B cell (primary cell): ENCODE measurements at regions of chr1 and their contacts with region 1.

Region 1: DNA sequence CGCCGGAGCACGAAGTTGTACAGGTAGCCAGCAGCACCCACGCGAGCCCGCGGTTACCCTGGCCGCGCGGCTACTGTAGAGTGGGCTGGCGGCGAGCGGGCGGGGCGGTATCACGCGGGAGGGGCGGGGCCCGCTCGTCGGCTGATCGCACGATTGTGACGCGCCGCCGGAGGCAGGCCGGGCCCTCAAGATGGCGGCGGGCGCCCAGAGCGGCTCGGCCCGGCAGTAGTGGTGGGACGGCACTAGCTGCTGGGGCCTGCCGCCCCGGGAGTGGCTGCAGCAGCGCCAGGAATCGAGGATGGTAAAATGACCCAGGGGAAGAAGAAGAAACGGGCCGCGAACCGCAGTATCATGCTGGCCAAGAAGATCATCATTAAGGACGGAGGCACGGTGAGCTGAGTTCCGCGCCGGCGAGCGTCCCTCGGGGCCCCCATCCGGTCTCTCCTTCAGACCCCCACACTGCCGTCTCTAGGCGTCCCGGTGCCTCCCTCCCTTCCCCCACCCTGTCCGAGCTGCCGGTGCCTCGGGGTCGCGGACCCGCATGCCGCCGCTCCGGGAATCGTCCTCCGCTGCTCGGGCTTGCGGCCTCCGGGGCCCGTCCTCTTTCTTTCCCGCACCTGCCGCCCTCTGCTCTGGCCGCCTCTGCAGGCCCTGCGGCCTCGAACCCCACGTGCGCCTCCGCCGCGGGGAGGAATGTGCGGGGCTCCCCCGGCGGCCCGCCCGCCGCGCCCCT is 68.3 kb downstream of the SLC35A3 start:
- DNase-seq: peak; percentile 93
- ATAC-seq: peak; percentile 93
- H3K4me3 ChIP-seq: peak overlapping the region; percentile 87 to 99 (median 97)
- H3K4me3 Mint-ChIP-seq: peak overlapping the region; percentile 92
- H3K27ac ChIP-seq: peak overlapping the region; percentile 96 to 99
- H3K27ac Mint-ChIP-seq: peak overlapping the region; percentile 94
- H3K4me1 ChIP-seq: peaks cover 28 to 40% of the 10 kb centered on the region in 2 donors
- H3K4me1 Mint-ChIP-seq: peaks cover 42% of the 10 kb centered on the region
- H3K27me3 ChIP-seq: no peaks in the 10 kb centered on the region
- H3K27me3 Mint-ChIP-seq: no peaks in the 10 kb centered on the region
- CTCF ChIP-seq: no peak

Region 2: GRCh38 chr1:99808391-99809115 is 229.5 kb before region 1 on chr1:
- CTCF ChIA-PET with region 1: interaction called, 3 read pairs
- POLR2A ChIA-PET with region 1: no interaction called
- intact Hi-C with region 1: loop called (anchors 1 kb)
- DNase-seq: peak; percentile 78
- ATAC-seq: peak; percentile 56
- H3K4me3 ChIP-seq: no peak overlapping the region
- H3K4me3 Mint-ChIP-seq: no peak overlapping the region
- H3K27ac ChIP-seq: no peak overlapping the region
- H3K27ac Mint-ChIP-seq: no peak overlapping the region
- H3K4me1 ChIP-seq: peaks cover 0 to 6% of the 10 kb centered on the region in 2 donors
- H3K4me1 Mint-ChIP-seq: peaks cover 4% of the 10 kb centered on the region
- H3K27me3 ChIP-seq: peaks cover 0 to 4% (median 2%) of the 10 kb centered on the region in 4 experiments
- H3K27me3 Mint-ChIP-seq: peaks cover 31% of the 10 kb centered on the region
- CTCF ChIP-seq: peak; percentile 85

Region 3: GRCh38 chr1:99969729-99970621 is 68.1 kb before region 1 on chr1 and contains the start of gene SLC35A3:
- CTCF ChIA-PET with region 1: interaction called, 4 read pairs
- POLR2A ChIA-PET with region 1: no interaction called
- intact Hi-C with region 1: loop called (anchors 2 kb)
- DNase-seq: peak; percentile 82
- ATAC-seq: peak; percentile 75
- H3K4me3 ChIP-seq: peak within 1 kb of the TSS; percentile 66 to 89 (median 82)
- H3K4me3 Mint-ChIP-seq: peak within 1 kb of the TSS; percentile 100
- H3K27ac ChIP-seq: peak within 1 kb of the TSS; percentile 54 to 84
- H3K27ac Mint-ChIP-seq: peak within 1 kb of the TSS; percentile 95
- H3K4me1 ChIP-seq: peaks cover 10% of the 10 kb centered on the region in 2 donors
- H3K4me1 Mint-ChIP-seq: peaks cover 31% of the 10 kb centered on the region
- H3K27me3 ChIP-seq: no peaks in the 10 kb centered on the region
- H3K27me3 Mint-ChIP-seq: no peaks in the 10 kb centered on the region
- CTCF ChIP-seq: no peak
- total RNA-seq, gene SLC35A3: 30.2 and 31.0 TPM in 2 replicates

Region 4: DNA sequence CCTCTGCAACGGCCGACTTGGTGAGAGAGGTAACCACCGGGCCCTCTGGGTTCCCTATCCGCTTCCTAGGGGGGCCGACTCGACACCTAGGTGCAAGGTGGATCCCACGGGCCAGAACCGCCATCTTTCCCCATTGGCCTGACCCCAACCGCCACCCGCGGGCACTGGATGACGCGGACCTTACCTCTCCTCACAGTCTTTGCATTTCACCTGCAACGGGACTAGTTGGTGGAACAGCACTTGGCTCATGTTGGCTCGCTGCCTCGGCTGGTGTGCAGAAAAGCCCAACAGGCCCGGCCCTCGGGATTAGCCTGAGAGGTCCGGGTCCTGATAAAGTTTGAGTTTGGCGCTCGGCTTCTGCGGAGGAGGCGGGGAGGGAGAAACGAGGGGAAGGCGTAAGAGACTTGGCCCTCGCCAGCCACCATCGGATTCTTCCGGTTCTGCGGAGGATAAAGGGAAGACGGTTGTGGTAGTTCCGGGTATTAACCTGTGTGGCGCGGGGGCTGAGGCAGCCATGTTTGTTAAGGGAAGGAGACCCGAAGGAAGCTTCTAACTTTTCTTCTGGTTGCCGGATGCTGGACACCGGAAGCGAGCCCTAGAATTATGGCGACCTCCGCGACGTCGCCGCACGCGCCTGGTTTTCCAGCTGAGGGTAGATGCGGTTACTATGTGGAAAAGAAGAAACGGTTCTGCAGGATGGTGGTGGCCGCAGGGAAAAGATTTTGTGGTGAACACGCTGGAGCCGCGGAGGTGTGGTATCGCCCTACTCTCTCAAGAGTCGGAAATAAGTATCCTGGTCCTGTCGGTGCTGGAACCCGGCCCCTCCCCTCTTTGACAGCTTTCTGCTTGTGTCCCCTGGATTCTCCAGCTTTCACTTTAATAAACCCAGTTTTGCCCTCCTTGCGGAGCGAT is 94.7 kb after region 1 on chr1 and contains the starts of genes SASS6 and TRMT13:
- CTCF ChIA-PET with region 1: no interaction called
- POLR2A ChIA-PET with region 1: interaction called, 4 read pairs
- intact Hi-C with region 1: loop called (anchors 1 kb)
- DNase-seq: peak; percentile 96
- ATAC-seq: peak; percentile 98
- H3K4me3 ChIP-seq: peak within 1 kb of the TSS; percentile 81 to 95 (median 87)
- H3K4me3 Mint-ChIP-seq: peak within 1 kb of the TSS; percentile 98
- H3K27ac ChIP-seq: peak within 1 kb of the TSS; percentile 59 to 72
- H3K27ac Mint-ChIP-seq: peak within 1 kb of the TSS; percentile 96
- H3K4me1 ChIP-seq: peaks cover 18 to 20% of the 10 kb centered on the region in 2 donors
- H3K4me1 Mint-ChIP-seq: peaks cover 37% of the 10 kb centered on the region
- H3K27me3 ChIP-seq: no peaks in the 10 kb centered on the region
- H3K27me3 Mint-ChIP-seq: no peaks in the 10 kb centered on the region
- CTCF ChIP-seq: no peak
- total RNA-seq, gene SASS6: 7.0 and 8.0 TPM in 2 replicates
- total RNA-seq, gene TRMT13: 40.1 and 41.5 TPM in 2 replicates

Region 5: DNA sequence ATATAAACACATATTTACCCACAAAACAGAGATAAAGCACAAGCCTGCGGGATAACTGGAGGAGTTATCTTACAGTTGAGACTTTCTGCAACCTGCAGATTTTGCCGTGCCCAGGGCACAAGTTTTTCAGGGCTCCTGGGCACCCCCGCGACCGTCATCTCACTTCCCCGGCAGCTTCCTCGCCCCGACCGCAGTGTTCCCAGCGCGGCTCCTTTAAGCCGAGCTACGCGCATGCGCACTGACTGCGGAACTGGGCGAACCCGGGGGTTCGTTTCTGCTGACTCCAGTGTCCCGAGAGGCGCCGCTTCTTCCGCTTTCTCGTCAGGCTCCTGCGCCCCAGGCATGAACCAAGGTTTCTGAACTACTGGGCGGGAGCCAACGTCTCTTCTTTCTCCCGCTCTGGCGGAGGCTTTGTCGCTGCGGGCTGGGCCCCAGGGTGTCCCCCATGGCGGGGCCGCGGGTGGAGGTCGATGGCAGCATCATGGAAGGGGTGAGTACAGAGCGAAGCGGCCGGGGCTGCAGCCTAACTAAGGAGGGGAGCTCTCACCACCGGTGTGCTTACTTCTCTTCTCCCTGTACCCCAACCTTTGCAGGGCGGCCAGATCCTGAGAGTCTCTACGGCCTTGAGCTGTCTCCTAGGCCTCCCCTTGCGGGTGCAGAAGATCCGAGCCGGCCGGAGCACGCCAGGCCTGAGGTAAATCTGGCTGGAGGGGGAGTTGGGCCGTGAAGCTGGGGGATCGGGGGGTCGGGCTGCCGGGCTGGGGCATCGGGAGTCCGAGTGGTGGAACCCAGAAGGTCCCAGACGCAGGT is 228.0 kb after region 1 on chr1 and contains the start of gene RTCA:
- CTCF ChIA-PET with region 1: no interaction called
- POLR2A ChIA-PET with region 1: no interaction called
- intact Hi-C with region 1: loop called (anchors 1 kb)
- DNase-seq: peak; percentile 96
- ATAC-seq: peak; percentile 95
- H3K4me3 ChIP-seq: peak within 1 kb of the TSS; percentile 74 to 98 (median 94)
- H3K4me3 Mint-ChIP-seq: peak within 1 kb of the TSS; percentile 100
- H3K27ac ChIP-seq: peak within 1 kb of the TSS; percentile 58 to 81
- H3K27ac Mint-ChIP-seq: peak within 1 kb of the TSS; percentile 98
- H3K4me1 ChIP-seq: peaks cover 15 to 21% of the 10 kb centered on the region in 2 donors
- H3K4me1 Mint-ChIP-seq: peaks cover 38% of the 10 kb centered on the region
- H3K27me3 ChIP-seq: no peaks in the 10 kb centered on the region
- H3K27me3 Mint-ChIP-seq: no peaks in the 10 kb centered on the region
- CTCF ChIP-seq: no peak
- total RNA-seq, gene RTCA: 31.0 and 40.2 TPM in 2 replicates

Region 6: DNA sequence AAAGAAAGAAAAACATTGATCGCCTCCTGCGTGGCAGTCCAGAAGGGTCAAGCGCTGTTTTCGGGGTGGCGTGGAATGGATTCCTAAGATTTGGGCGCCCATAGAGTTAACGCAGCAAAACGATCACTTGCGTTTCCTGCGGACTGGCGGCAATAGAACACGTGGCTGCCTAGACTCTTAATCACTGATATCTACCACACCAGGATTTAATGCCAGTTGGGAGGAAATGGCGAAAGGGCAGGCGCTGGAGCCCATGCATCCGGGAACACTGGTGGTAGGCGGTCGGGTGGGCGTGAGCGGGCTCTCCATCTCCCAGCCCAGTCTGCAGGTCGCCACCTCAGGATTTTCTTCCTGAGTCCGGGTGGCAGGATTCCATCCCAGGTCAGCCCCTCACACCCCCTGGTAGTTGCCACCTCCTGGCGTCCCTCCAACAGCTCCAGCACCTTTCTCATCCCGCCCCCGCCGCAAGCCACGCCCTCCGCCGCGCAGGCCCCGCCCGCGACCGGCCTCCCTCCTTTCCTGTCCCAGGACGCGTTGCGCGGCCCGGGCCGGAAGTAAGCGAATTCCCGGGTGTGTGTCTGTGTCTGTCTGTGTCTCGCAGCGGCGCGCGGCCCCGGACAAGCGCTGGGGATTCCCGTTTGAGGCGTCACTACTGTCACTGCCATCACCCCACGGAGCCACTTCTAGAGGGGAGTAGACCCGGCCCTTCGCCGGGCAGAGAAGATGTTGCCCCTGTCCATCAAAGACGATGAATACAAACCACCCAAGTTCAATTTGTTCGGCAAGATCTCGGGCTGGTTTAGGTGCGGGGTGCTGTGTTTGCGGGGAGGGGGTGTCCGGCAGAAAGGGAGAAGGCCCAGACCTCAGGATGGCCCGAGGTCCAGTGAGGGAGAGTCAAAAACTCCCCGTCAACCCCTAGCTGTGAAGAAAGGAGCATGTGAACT is 857.7 kb after region 1 on chr1 and contains the start of gene SLC30A7:
- CTCF ChIA-PET with region 1: no interaction called
- POLR2A ChIA-PET with region 1: no interaction called
- intact Hi-C with region 1: loop called (anchors 1 kb)
- DNase-seq: peak; percentile 95
- ATAC-seq: peak; percentile 87
- H3K4me3 ChIP-seq: peak within 1 kb of the TSS; percentile 75 to 99 (median 98)
- H3K4me3 Mint-ChIP-seq: peak within 1 kb of the TSS; percentile 94
- H3K27ac ChIP-seq: peak within 1 kb of the TSS; percentile 85 to 97
- H3K27ac Mint-ChIP-seq: peak within 1 kb of the TSS; percentile 94
- H3K4me1 ChIP-seq: peaks cover 10 to 11% of the 10 kb centered on the region in 2 donors
- H3K4me1 Mint-ChIP-seq: peaks cover 32% of the 10 kb centered on the region
- H3K27me3 ChIP-seq: no peaks in the 10 kb centered on the region
- H3K27me3 Mint-ChIP-seq: no peaks in the 10 kb centered on the region
- CTCF ChIP-seq: no peak
- total RNA-seq, gene SLC30A7: 26.7 and 28.6 TPM in 2 replicates